ENCODE measurements at regions of chr5 and their contacts with region 1.

Region 1: DNA sequence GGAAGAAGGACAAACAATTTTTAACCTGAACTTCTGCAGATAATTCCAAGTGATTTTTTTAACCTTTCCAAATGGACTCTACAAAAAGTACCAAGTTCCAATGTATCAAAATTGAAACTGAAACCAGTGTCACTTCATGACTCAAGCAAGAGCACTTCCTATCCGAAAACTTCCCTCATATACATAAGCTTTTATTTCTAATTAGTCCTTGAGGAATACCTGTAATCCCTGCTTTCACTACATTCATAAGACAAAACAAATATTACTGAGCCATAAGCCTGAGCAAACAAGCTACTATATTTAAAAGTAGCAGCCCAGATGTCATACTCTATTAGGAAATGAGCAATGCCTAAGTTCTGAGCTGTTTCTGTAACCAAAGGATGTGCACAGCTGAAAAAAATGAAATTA is 224.4 kb downstream of the EBF1 start:
- DNase-seq: no peak
- H3K4me3 ChIP-seq: peak overlapping the region; percentile 37 to 54
- H3K27ac ChIP-seq: peak overlapping the region; percentile 55 to 71
- H3K4me1 ChIP-seq: peaks cover 3 to 47% of the 10 kb centered on the region in 2 donors
- H3K27me3 ChIP-seq: no peaks in the 10 kb centered on the region
- CTCF ChIP-seq: no peak

Region 2: DNA sequence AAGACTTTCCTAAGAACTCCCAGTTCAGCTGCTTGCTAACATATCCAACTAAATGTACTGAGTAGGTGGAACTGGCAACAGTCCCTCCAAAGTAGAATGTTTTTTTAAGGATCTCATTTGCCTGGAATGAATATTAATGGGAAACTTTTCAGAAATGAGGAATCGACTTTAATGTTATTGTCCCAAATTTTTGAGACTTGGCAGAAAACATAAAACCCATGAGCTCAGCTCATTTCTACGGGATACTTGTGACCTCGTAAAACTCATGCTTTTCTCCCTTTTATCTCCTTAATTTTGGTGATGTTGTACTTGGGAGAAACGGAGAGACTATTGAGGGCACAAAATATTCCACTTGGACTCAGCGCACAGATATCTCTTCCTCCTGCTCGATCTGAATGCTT is 72.3 kb before region 1 on chr5:
- intact Hi-C with region 1: loop called (anchors 2 kb)
- DNase-seq: no peak
- H3K4me3 ChIP-seq: peak overlapping the region in 1 of 2 donors; percentile 36
- H3K27ac ChIP-seq: peak overlapping the region; percentile 43 to 69
- H3K4me1 ChIP-seq: peaks cover 3 to 51% of the 10 kb centered on the region in 2 donors
- H3K27me3 ChIP-seq: no peaks in the 10 kb centered on the region
- CTCF ChIP-seq: no peak

Region 3: DNA sequence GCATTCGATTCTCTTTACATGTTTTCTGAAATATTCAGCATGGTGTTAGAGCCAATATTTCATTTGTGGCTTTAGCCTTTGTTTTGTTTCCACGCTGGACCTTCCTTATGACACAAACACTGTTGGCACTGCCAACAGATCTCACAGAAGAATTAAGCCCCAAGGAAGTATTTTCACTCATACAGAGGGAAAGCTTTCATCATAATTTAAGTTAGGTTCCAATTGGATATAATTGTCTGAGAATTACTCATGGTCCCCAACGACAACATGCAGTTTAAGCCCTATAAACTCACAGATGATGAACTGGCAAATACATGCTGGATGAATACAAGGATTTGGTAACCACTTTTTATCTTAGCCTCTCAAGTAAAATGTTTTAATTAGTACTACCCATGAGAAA is 35.1 kb before region 1 on chr5:
- intact Hi-C with region 1: no loop called
- DNase-seq: no peak
- H3K4me3 ChIP-seq: no peak overlapping the region
- H3K27ac ChIP-seq: no peak overlapping the region
- H3K4me1 ChIP-seq: peaks cover 0 to 3% of the 10 kb centered on the region in 2 donors
- H3K27me3 ChIP-seq: no peaks in the 10 kb centered on the region
- CTCF ChIP-seq: no peak

Region 4: DNA sequence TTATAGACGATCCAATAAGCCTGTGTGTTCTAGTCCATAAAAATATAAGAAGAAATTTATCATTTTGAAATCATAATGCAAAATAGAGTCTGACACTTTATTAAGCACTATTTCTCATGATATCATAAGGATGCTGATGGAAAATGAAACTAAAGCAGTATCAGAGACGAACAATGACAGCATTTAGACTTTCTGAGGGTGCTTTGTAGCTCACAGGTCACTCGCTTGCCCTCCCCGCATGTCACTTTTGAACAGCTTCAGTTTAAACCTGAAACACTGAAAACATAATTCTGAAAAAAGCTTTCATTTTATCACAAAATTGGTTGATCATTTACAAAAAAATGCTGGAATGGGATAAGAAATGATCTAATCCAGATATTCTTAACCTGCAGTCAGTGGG is 22.7 kb before region 1 on chr5:
- intact Hi-C with region 1: no loop called
- DNase-seq: no peak
- H3K4me3 ChIP-seq: no peak overlapping the region
- H3K27ac ChIP-seq: no peak overlapping the region
- H3K4me1 ChIP-seq: peaks cover 2 to 29% of the 10 kb centered on the region in 2 donors
- H3K27me3 ChIP-seq: no peaks in the 10 kb centered on the region
- CTCF ChIP-seq: no peak

Measured in ascending aorta (tissue), 2 donors.